IMR-90 (cell line): ENCODE measurements at regions of chr3 and their contacts with region 1.

Region 1: DNA sequence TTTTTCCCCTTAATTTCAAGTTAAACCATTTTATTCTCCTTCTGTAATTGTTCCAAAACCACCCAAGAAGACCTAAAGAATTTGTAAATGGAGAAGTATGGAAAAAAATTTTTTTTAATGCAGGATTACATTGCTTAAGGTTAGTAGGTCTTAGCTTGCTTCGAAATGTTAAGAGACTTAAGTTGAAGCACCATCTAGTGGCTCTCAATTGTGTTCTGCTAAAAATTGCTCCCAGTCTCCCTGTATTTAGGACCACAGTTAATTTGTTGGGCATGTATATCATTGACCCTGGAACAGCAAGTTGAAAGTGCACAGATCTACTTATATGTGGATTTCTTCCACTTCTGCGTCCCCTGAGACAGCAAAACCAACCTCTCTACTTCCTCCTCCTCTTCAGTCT is 32.4 kb downstream of the CD200R1L start:
- DNase-seq: peak; percentile 89
- ATAC-seq: peak; percentile 64
- H3K4me3 ChIP-seq: no peak overlapping the region
- H3K27ac ChIP-seq: peak overlapping the region; percentile 32; the same call in 1 of the 2 replicates
- H3K4me1 ChIP-seq: peaks cover 30% of the 10 kb centered on the region
- H3K27me3 ChIP-seq: no peaks in the 10 kb centered on the region
- CTCF ChIP-seq: peak; percentile 74
- POLR2A ChIP-seq: no peak
- RAD21 ChIP-seq: peak; percentile 83

Region 2: GRCh38 chr3:112111785-112112402 is 702.4 kb before region 1 on chr3:
- CTCF ChIA-PET with region 1: no interaction called
- POLR2A ChIA-PET with region 1: no interaction called
- dilution Hi-C with region 1: no loop called
- in situ Hi-C with region 1: no loop called
- intact Hi-C with region 1: no loop called
- DNase-seq: peak; percentile 77
- ATAC-seq: peak; percentile 96
- H3K4me3 ChIP-seq: no peak overlapping the region
- H3K27ac ChIP-seq: no peak overlapping the region
- H3K4me1 ChIP-seq: no peaks in the 10 kb centered on the region
- H3K27me3 ChIP-seq: no peaks in the 10 kb centered on the region
- CTCF ChIP-seq: peak; percentile 72
- POLR2A ChIP-seq: no peak
- RAD21 ChIP-seq: peak; percentile 78

Region 3: DNA sequence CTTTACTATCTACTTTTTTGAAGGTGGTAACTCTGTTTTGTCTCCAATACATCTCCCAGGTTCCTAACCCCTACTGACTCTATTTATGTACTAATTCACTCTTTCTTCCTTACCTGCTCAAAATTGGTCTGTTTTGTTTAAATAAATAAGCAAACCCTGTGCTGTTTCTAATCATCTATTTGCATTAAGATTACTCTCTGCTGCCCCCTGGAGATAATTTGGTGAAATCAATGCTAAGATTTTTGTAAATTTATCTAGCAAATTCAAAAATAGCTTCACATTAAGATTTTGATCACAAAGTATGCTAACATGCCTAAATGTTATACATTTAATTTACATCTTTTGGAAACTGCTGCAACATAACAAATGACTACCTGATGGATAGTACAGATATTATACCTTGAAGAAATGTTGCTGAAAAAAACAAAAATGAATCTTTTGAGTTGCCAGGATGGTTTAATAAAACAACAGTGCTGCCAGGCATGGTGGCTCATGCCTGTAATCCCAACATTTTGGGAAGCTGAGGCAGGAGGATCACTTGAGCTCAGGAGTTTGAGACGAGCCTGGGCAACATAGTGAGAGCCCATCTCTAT is 165.1 kb after region 1 on chr3:
- CTCF ChIA-PET with region 1: no interaction called
- POLR2A ChIA-PET with region 1: no interaction called
- dilution Hi-C with region 1: no loop called
- in situ Hi-C with region 1: no loop called
- intact Hi-C with region 1: loop called (anchors 2 kb)
- DNase-seq: peak; percentile 39
- ATAC-seq: no peak
- H3K4me3 ChIP-seq: no peak overlapping the region
- H3K27ac ChIP-seq: no peak overlapping the region
- H3K4me1 ChIP-seq: peaks cover 3% of the 10 kb centered on the region
- H3K27me3 ChIP-seq: no peaks in the 10 kb centered on the region
- CTCF ChIP-seq: peak; percentile 74
- POLR2A ChIP-seq: no peak
- RAD21 ChIP-seq: peak; percentile 61

Region 4: GRCh38 chr3:112990672-112991602 is 176.7 kb after region 1 on chr3 and contains the start of gene GTPBP8:
- CTCF ChIA-PET with region 1: interaction called, 3 read pairs
- POLR2A ChIA-PET with region 1: no interaction called
- dilution Hi-C with region 1: no loop called
- in situ Hi-C with region 1: no loop called
- intact Hi-C with region 1: loop called (anchors 5 kb)
- DNase-seq: peak; percentile 84
- ATAC-seq: peak; percentile 98
- H3K4me3 ChIP-seq: peak within 1 kb of the TSS; percentile 75
- H3K27ac ChIP-seq: peak within 1 kb of the TSS; percentile 86
- H3K4me1 ChIP-seq: no peaks in the 10 kb centered on the region
- H3K27me3 ChIP-seq: peaks cover 2% of the 10 kb centered on the region; the same call in 1 of the 2 replicates
- CTCF ChIP-seq: no peak
- POLR2A ChIP-seq: peak; percentile 83
- RAD21 ChIP-seq: no peak
- total RNA-seq, gene GTPBP8: 15.4 and 19.4 TPM in 2 replicates